Right cardiac atrium (tissue), 5 donors: ENCODE measurements at regions of chr15 and their contacts with region 1.

Region 1: GRCh38 chr15:39686000-39686613 is 96.5 kb downstream of the FSIP1 start:
- DNase-seq: no peak
- ATAC-seq: peak; percentile 49 to 68
- H3K4me3 ChIP-seq: no peak overlapping the region
- H3K27ac ChIP-seq: no peak overlapping the region
- H3K4me1 ChIP-seq: peaks cover 3% of the 10 kb centered on the region
- H3K27me3 ChIP-seq: no peaks in the 10 kb centered on the region

Region 2: GRCh38 chr15:38714309-38715072 is 971.6 kb before region 1 on chr15:
- intact Hi-C with region 1: loop called in 1 of 4 experiments (anchors 10 kb)
- DNase-seq: no peak
- ATAC-seq: no peak
- H3K4me3 ChIP-seq: no peak overlapping the region
- H3K27ac ChIP-seq: no peak overlapping the region
- H3K4me1 ChIP-seq: no peaks in the 10 kb centered on the region
- H3K27me3 ChIP-seq: no peaks in the 10 kb centered on the region